SK-N-SH (cell line): ENCODE measurements at regions of chr14 and their contacts with region 1.

Region 1: DNA sequence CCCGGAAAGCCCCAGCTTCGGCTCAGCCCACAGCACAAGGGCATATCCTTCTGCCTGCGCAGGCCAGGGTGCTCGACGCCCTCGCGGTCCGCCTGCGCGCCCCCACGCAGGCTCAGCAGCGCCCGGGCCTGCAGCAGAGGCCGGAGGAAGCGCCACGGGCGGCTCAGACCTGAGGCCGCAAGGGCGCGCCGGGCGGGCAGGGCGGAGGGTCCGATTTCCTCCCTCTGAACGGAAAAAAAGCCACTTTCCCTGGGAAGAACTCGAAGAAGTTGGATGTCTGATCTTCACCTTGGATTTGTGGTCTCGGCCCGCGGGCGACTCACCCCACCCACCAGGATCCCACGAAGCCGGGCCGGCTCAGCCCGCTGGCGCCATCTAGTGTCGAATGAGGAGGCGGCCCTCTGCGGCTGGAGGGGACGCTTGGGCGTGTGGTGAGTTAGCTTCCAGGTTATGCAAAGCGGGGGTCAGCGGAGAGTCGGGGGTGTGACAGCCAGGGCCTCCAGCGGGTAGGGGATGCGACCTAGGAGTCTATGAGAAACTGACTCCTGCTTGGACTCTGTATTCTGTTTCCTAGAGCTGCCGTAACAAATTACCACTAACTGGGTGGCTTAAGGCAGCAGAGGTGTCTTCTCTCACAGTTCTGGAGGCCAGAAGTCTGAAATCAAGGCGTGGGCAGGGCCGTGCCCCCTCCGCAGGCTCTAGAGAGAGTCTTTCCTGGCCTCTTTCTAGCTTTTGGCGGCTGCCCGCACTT is 40.0 kb upstream of the SRSF5 start:
- DNase-seq: peak; percentile 95
- H3K4me3 ChIP-seq: peak overlapping the region; percentile 32 to 59
- H3K27ac ChIP-seq: no peak overlapping the region
- H3K4me1 ChIP-seq: peaks cover 0 to 6% of the 10 kb centered on the region in 2 experiments; a peak in 1 of 4 replicates
- H3K27me3 ChIP-seq: no peaks in the 10 kb centered on the region
- CTCF ChIP-seq: peak; percentile 98
- EP300 ChIP-seq: no peak
- RAD21 ChIP-seq: peak; percentile 97

Region 2: DNA sequence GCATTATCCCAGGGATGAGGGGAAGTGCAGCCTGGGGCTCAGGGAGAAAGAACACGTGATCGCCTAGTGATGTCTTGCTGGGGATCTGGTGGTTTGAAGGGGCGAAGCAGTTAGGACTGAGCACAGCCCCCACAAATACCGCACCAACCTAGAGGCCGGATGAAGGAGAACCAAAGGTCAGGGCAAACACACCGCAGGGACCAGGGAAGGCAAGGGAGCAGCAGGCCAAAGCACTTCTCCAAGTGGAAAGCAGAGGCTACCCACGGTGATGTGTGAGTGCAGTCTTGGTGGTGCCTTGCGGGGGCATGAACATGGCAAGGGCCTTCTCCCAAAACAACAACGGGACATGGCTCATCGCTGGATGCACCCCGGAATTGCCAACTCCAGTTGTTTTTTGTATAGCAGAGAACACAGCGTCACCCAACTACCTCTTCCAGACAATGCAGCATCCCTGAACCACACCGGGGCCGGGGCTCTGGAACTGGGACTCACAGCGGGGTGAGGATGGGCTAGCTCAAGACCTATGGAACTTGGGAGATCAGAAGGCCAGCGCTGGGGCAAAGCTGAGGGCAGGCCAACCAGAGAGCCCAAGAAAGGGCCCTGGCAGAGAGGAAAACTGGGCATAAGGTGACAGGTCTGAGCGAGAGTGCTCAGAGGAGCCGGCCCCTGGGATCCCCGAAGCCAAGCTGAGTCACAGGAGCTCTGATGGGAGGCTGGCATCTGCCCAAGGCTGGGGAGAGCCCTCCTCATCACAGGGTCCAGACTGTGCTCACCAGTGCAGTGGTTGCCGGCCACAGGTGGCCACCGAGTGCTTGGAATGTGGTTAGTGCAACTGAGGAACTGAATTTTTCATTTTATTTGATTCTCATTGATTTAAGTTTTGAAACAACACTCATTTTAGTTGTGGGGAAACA is 455.9 kb before region 1 on chr14:
- CTCF ChIA-PET with region 1: no interaction called
- POLR2A ChIA-PET with region 1: no interaction called
- DNase-seq: no peak
- H3K4me3 ChIP-seq: no peak overlapping the region
- H3K27ac ChIP-seq: no peak overlapping the region
- H3K4me1 ChIP-seq: no peaks in the 10 kb centered on the region
- H3K27me3 ChIP-seq: no peaks in the 10 kb centered on the region
- CTCF ChIP-seq: peak; percentile 12; the same call in 1 of the 2 replicates
- EP300 ChIP-seq: no peak
- RAD21 ChIP-seq: no peak

Region 3: GRCh38 chr14:69580009-69580577 is 146.8 kb before region 1 on chr14:
- CTCF ChIA-PET with region 1: interaction called, 107 read pairs
- POLR2A ChIA-PET with region 1: no interaction called
- DNase-seq: peak; percentile 40
- H3K4me3 ChIP-seq: no peak overlapping the region
- H3K27ac ChIP-seq: no peak overlapping the region
- H3K4me1 ChIP-seq: no peaks in the 10 kb centered on the region
- H3K27me3 ChIP-seq: peaks cover 6% of the 10 kb centered on the region; the same call in 1 of the 2 replicates
- CTCF ChIP-seq: peak; percentile 44
- EP300 ChIP-seq: no peak
- RAD21 ChIP-seq: peak; percentile 48

Region 4: GRCh38 chr14:69611201-69612011 is 115.5 kb before region 1 on chr14 and contains the start of gene SUSD6:
- CTCF ChIA-PET with region 1: interaction called, 96 read pairs
- POLR2A ChIA-PET with region 1: interaction called, 3 read pairs
- DNase-seq: peak; percentile 98
- H3K4me3 ChIP-seq: peak within 1 kb of the TSS; percentile 81 to 82
- H3K27ac ChIP-seq: peak within 1 kb of the TSS; percentile 64 to 89
- H3K4me1 ChIP-seq: peaks cover 3 to 31% of the 10 kb centered on the region in 2 experiments; a peak in 3 of 4 replicates
- H3K27me3 ChIP-seq: no peaks in the 10 kb centered on the region
- CTCF ChIP-seq: no peak
- EP300 ChIP-seq: no peak
- RAD21 ChIP-seq: no peak
- polyA plus RNA-seq, gene SUSD6: 8.5 and 9.5 TPM in 2 replicates

Region 5: DNA sequence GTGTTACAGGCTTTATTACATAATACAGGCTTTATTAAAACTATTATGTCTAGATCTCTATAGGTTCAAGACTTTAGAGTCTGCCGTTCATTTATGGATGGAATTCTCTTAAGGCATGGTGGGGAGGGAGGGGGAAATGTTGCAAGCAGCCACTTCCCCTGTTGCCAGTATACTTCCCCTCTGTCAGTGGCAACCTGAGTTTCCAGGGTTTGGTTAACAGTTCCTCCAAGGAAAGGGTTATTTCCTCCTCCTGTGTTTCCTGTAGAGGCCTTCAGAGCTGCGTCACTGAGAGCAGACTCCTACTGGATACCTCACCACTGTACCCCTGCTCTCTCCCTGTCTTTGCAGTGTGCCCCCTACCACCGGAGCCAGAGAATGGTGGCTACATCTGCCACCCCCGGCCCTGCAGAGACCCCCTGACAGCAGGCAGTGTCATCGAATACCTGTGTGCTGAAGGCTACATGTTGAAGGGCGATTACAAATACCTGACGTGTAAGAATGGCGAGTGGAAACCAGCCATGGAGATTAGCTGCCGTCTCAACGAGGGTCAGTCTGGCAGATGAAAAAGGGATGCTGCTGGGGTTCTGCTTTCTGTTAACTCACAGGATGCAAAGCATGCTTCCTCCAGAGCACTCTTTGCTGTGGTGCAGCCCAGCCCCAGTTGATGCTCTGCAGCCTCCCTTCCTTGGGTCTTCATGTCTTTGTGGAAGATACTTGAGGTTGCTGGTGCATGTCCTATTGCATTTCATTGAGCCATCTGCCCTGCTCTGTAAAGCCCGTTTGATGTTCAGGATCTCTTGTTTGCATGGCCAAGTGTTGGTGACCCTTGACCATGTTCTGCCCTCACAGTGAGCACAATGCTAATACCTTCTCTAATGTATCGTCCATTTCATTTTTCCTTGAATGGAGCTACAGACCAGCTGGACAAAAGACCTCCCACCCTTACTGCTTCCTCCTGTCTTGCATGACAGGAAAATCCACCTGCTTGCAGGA is 23.6 kb before region 1 on chr14:
- CTCF ChIA-PET with region 1: interaction called, 11 read pairs
- POLR2A ChIA-PET with region 1: no interaction called
- DNase-seq: no peak
- H3K4me3 ChIP-seq: no peak overlapping the region
- H3K27ac ChIP-seq: no peak overlapping the region; a peak in 1 of 4 replicates
- H3K4me1 ChIP-seq: peaks cover 0 to 19% of the 10 kb centered on the region in 2 experiments; a peak in 1 of 4 replicates
- H3K27me3 ChIP-seq: no peaks in the 10 kb centered on the region
- CTCF ChIP-seq: no peak
- EP300 ChIP-seq: no peak
- RAD21 ChIP-seq: no peak

Region 6: GRCh38 chr14:69715725-69716477 is 11.0 kb before region 1 on chr14:
- CTCF ChIA-PET with region 1: interaction called, 27 read pairs
- POLR2A ChIA-PET with region 1: no interaction called
- DNase-seq: peak; percentile 80
- H3K4me3 ChIP-seq: no peak overlapping the region
- H3K27ac ChIP-seq: peak overlapping the region; percentile 32 to 44; a peak in 3 of 4 replicates
- H3K4me1 ChIP-seq: peaks cover 34 to 43% of the 10 kb centered on the region in 2 experiments; a peak in 3 of 4 replicates
- H3K27me3 ChIP-seq: no peaks in the 10 kb centered on the region
- CTCF ChIP-seq: no peak
- EP300 ChIP-seq: peak in 1 of 2 experiments; percentile 68; a peak in 1 of 4 replicates
- RAD21 ChIP-seq: peak; percentile 18; the same call in 1 of the 2 replicates

Region 7: GRCh38 chr14:69749956-69750355 is 23.0 kb after region 1 on chr14:
- CTCF ChIA-PET with region 1: interaction called, 13 read pairs
- POLR2A ChIA-PET with region 1: no interaction called
- DNase-seq: no peak
- H3K4me3 ChIP-seq: no peak overlapping the region
- H3K27ac ChIP-seq: no peak overlapping the region
- H3K4me1 ChIP-seq: no peaks in the 10 kb centered on the region
- H3K27me3 ChIP-seq: no peaks in the 10 kb centered on the region
- CTCF ChIP-seq: no peak
- EP300 ChIP-seq: no peak
- RAD21 ChIP-seq: no peak